Common myeloid progenitor, CD34-positive (primary cell): ENCODE measurements at regions of chr11 and their contacts with region 1.

Region 1: GRCh38 chr11:65354265-65355012 is at the start of gene TIGD3:
- DNase-seq: peak; percentile 95 to 98 (median 98)
- H3K4me3 ChIP-seq: peak within 1 kb of the TSS; percentile 62 to 84 (median 68)
- H3K27ac ChIP-seq: no peak within 1 kb of the TSS
- H3K4me1 ChIP-seq: peaks cover 0 to 25% (median 23%) of the 10 kb centered on the region in 4 experiments
- H3K27me3 ChIP-seq: peaks cover 0 to 2% (median 0%) of the 10 kb centered on the region in 5 experiments

Region 2: GRCh38 chr11:65274735-65275682 is 79.4 kb before region 1 on chr11:
- CTCF ChIA-PET with region 1: interaction called, 14 read pairs
- POLR2A ChIA-PET with region 1: interaction called, 4 read pairs
- DNase-seq: peak; percentile 68 to 86 (median 76)
- H3K4me3 ChIP-seq: no peak overlapping the region
- H3K27ac ChIP-seq: no peak overlapping the region
- H3K4me1 ChIP-seq: no peaks in the 10 kb centered on the region
- H3K27me3 ChIP-seq: no peaks in the 10 kb centered on the region

Region 3: GRCh38 chr11:65340226-65340625 is 14.2 kb before region 1 on chr11:
- CTCF ChIA-PET with region 1: interaction called, 76 read pairs
- POLR2A ChIA-PET with region 1: interaction called, 5 read pairs
- DNase-seq: no peak
- H3K4me3 ChIP-seq: no peak overlapping the region
- H3K27ac ChIP-seq: peak overlapping the region in 1 of 2 experiments; percentile 47
- H3K4me1 ChIP-seq: peaks cover under 1 to 5% (median 4%) of the 10 kb centered on the region in 4 experiments
- H3K27me3 ChIP-seq: no peaks in the 10 kb centered on the region

Region 4: GRCh38 chr11:65366340-65366773 is 11.9 kb after region 1 on chr11:
- CTCF ChIA-PET with region 1: interaction called, 15 read pairs
- POLR2A ChIA-PET with region 1: interaction called, 5 read pairs
- DNase-seq: peak; percentile 73 to 79 (median 77)
- H3K4me3 ChIP-seq: peak overlapping the region in 1 of 7 experiments; percentile 38
- H3K27ac ChIP-seq: peak overlapping the region in 1 of 2 experiments; percentile 49
- H3K4me1 ChIP-seq: peaks cover 8 to 33% (median 31%) of the 10 kb centered on the region in 4 experiments
- H3K27me3 ChIP-seq: no peaks in the 10 kb centered on the region